Cardiac septum (tissue), 1 donor: ENCODE measurements at regions of chr11 and their contacts with region 1.

Region 1: GRCh38 chr11:111777094-111778046 is 11.2 kb upstream of the PPP2R1B start:
- DNase-seq: no peak

Region 2: GRCh38 chr11:111454561-111455192 is 322.7 kb before region 1 on chr11:
- intact Hi-C with region 1: loop called (anchors 10 kb)
- DNase-seq: no peak

Region 3: GRCh38 chr11:111565114-111565720 is 212.2 kb before region 1 on chr11:
- intact Hi-C with region 1: loop called (anchors 5 kb)
- DNase-seq: no peak

Region 4: DNA sequence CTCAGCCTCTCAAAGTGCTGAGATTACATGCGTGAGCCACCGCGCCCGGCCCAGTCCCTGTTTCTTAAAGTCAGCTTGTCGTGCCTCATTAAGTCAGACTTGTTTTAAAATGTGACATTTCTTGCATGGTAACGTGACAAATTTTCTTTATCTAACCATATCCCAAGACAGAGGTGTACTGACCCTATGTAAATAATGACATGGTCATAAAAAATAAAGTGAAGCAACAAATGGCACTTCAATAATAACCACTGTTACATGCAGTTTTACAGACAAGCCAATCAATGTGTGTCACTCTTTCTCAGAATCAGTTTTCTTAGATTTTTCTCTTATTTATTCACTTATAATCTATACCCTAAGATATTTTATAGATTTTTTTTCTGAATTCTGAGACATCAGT is 201.6 kb before region 1 on chr11:
- intact Hi-C with region 1: no loop called
- DNase-seq: no peak

Region 5: GRCh38 chr11:111601979-111602864 is 175.1 kb before region 1 on chr11 and contains the start of gene SIK2:
- intact Hi-C with region 1: loop called (anchors 2 kb)
- DNase-seq: peak; percentile 93
- total RNA-seq, gene SIK2: 27.3 TPM